GM18951 (cell line): ENCODE measurements at regions of chr7 and their contacts with region 1.

Region 1: GRCh38 chr7:38411404-38411803 is 138.0 kb upstream of the TARP start:
- POLR2A ChIP-seq: no peak

Region 2: GRCh38 chr7:38660427-38661099 is 249.2 kb after region 1 on chr7:
- in situ Hi-C with region 1: loop called (anchors 25 kb)
- POLR2A ChIP-seq: no peak